HCT116 (cell line): ENCODE measurements at regions of chr1 and their contacts with region 1.

Region 1: GRCh38 chr1:28877132-28877781 is 37.1 kb upstream of the EPB41 start:
- DNase-seq: peak; percentile 79
- ATAC-seq: peak; percentile 78
- H3K4me3 ChIP-seq: no peak overlapping the region
- H3K27ac ChIP-seq: no peak overlapping the region
- H3K4me1 ChIP-seq: peaks cover 6 to 21% of the 10 kb centered on the region in 2 experiments
- H3K27me3 ChIP-seq: no peaks in the 10 kb centered on the region
- CTCF ChIP-seq: peak in 2 of 3 experiments; percentile 85 to 96; a peak in 4 of 6 replicates
- POLR2A ChIP-seq: no peak
- RAD21 ChIP-seq: no peak

Region 2: GRCh38 chr1:28369371-28370238 is 507.7 kb before region 1 on chr1 and contains the start of gene PHACTR4:
- CTCF ChIA-PET with region 1: interaction called, 3 read pairs
- POLR2A ChIA-PET with region 1: no interaction called
- RAD21 ChIA-PET with region 1: interaction called in 1 of 2 experiments, 3 read pairs
- intact Hi-C with region 1: loop called (anchors 10 kb)
- DNase-seq: peak; percentile 92
- ATAC-seq: peak; percentile 92
- H3K4me3 ChIP-seq: peak within 1 kb of the TSS; percentile 87 to 93
- H3K27ac ChIP-seq: peak within 1 kb of the TSS; percentile 92
- H3K4me1 ChIP-seq: peaks cover 52 to 76% of the 10 kb centered on the region in 2 experiments
- H3K27me3 ChIP-seq: no peaks in the 10 kb centered on the region
- CTCF ChIP-seq: no peak
- POLR2A ChIP-seq: peak; percentile 93
- RAD21 ChIP-seq: no peak
- total RNA-seq, gene PHACTR4: 36.0 TPM

Region 3: DNA sequence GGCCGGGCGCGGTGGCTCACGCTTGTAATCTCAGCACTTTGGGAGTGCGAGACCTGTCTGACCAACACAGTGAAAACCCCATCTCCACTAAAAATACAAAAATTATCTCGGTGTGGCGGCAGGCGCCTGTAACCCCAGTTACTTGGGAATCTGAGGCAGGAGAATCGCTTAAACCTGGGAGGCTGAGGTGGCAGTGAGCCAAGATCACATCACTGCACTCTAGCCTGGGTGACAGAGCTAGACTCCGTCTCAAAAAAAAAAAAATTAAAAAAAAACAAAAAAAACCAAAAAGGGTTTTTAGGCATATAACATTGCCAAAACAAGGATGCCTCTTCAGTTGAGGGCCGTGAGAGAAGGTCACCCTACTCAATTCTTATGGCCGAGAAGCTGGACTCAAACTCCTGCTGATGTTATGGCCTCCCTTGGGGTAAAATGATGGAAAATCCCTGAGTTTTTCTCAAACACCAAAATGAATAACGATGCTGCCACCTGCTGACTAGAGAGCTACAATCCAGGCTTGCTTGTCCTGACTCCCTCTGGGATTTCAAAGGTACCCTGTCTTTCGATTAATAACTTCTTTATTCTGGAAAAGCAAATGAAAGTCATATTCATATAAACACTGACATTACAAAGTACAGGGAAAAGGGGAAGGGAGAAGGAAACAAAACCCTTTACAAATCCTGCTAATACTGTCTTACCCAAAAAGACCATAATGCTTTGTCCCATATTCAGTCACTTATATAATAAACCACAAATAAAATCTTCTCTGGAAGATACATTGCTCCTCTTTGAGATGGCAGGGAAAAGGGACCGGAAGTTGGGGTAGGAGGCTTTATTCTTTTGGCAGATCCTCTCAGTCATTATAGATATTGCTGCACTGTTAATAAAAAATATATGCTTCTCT is 274.5 kb before region 1 on chr1:
- CTCF ChIA-PET with region 1: interaction called, 11 read pairs
- POLR2A ChIA-PET with region 1: no interaction called
- RAD21 ChIA-PET with region 1: interaction called in 1 of 2 experiments, 4 read pairs
- intact Hi-C with region 1: no loop called
- DNase-seq: no peak
- ATAC-seq: peak; percentile 60
- H3K4me3 ChIP-seq: no peak overlapping the region
- H3K27ac ChIP-seq: peak overlapping the region; percentile 57
- H3K4me1 ChIP-seq: peaks cover 17 to 33% of the 10 kb centered on the region in 2 experiments
- H3K27me3 ChIP-seq: no peaks in the 10 kb centered on the region
- CTCF ChIP-seq: peak; percentile 73 to 87 (median 84)
- POLR2A ChIP-seq: no peak
- RAD21 ChIP-seq: peak; percentile 96

Region 4: DNA sequence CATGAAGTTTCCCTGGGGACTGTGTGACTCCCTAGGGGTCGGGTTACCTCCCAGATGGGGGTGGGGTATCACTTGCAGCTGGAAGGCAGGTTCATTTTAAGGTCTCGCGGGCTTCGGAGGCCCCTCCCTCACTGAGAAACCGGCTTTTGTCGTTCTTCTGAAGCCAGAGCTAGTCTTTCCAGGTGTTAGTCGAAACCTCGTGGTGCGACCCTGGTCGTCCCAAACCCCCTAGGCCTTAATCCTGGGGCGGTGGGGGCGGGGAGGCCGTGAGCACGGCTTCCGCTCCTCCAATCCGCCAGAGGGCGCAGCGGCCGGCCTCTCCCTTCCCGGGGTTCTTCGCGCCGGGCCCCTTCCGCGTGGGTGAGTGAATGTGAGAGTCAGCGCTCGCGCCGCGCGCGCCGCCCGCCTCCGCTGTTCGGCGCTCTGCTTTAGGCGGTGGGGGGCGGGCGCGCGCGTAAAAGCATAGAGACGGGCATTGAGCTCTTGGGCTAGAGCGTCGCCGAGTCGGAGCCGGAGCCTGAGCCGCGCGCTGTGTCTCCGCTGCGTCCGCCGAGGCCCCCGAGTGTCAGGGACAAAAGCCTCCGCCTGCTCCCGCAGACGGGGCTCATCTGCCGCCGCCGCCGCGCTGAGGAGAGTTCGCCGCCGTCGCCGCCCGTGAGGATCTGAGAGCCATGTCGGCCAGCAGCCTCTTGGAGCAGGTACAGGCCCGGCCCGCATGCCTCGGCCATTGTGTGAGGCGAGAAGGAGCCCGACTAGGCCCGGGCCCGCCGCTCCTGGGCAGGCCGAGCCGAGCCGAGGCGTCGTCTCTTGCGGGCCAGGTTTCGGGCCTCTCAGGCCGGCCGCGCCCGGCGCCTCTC is 140.6 kb before region 1 on chr1 and contains the start of gene YTHDF2:
- CTCF ChIA-PET with region 1: interaction called, 12 read pairs
- POLR2A ChIA-PET with region 1: no interaction called
- RAD21 ChIA-PET with region 1: interaction called in 1 of 2 experiments, 4 read pairs
- intact Hi-C with region 1: no loop called
- DNase-seq: peak; percentile 89
- ATAC-seq: peak; percentile 94
- H3K4me3 ChIP-seq: peak within 1 kb of the TSS; percentile 91 to 92
- H3K27ac ChIP-seq: peak within 1 kb of the TSS; percentile 97
- H3K4me1 ChIP-seq: peaks cover 11 to 20% of the 10 kb centered on the region in 2 experiments
- H3K27me3 ChIP-seq: no peaks in the 10 kb centered on the region
- CTCF ChIP-seq: peak; percentile 76 to 94 (median 85)
- POLR2A ChIP-seq: peak; percentile 29
- RAD21 ChIP-seq: peak; percentile 42
- total RNA-seq, gene YTHDF2: 90.6 TPM

Region 5: GRCh38 chr1:29120961-29121485 is 243.8 kb after region 1 on chr1:
- CTCF ChIA-PET with region 1: interaction called, 9 read pairs
- POLR2A ChIA-PET with region 1: interaction called, 3 read pairs
- RAD21 ChIA-PET with region 1: interaction called in 1 of 2 experiments, 3 read pairs
- intact Hi-C with region 1: loop called (anchors 1 kb)
- DNase-seq: peak; percentile 60
- ATAC-seq: peak; percentile 65
- H3K4me3 ChIP-seq: peak overlapping the region; percentile 79 to 96
- H3K27ac ChIP-seq: peak overlapping the region; percentile 93; the same call in 1 of the 2 replicates
- H3K4me1 ChIP-seq: peaks cover 2 to 11% of the 10 kb centered on the region in 2 experiments; a peak in 2 of 4 replicates
- H3K27me3 ChIP-seq: no peaks in the 10 kb centered on the region
- CTCF ChIP-seq: peak in 2 of 3 experiments; percentile 85 to 89; a peak in 4 of 6 replicates
- POLR2A ChIP-seq: no peak
- RAD21 ChIP-seq: no peak